Activated T-helper 2 cell treated with anti-CD3 and anti-CD28 coated beads, Interferon-gamma antibody, Interleukin-2, Interleukin-4, amounts not matched to agents 10 μg/mL and 5 μg/mL and 100 μg/mL, durations not matched to agents 14 hours and 24 hours and 36 hours (primary cell): ENCODE measurements at regions of chr1 and their contacts with region 1.

Region 1: DNA sequence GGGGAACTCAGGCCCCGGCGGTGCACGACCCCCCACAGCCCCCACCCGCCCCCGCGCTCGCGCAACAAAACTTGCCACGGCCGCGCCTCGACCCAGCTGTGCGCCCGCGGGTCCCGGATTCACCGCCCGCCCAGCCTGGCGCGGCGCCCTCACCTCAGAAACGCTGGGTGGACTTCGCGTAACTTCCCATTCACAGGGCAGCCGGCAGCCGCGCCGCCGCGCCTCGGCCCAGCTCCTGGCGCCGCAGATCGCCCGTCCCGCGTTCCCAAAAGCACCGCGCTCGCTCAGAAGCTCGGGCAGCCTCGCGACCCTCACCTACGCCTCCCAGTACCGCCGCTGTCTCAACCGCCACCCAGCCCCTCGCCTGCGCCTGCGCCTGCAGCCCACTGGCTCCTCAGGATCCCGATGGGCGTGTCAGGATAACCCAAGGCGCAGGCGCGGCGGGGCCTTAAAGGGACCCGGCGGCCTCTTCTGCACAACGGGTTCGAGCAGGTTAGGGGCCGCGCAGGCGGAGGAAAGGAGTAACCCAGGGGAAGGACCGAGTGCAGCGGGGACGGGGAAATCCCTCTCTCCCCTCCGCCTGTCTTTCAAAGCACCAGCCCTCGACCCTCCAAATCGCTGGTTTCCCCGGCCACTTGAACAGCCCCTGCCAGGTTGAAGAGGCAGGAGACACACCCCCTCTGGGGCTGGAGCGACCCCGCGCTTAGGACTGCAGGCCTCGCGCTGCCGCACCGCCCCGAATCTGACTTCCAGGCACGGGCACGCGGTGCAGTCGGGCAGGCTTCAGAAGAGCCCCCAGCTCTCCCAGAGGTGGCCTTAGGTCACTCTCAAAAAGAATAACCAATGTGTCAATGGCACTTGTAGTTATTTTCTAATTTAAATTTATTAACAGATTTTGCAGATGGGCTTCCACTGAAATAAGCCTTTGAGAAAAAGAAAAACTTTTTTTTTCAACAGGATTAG is at the start of gene NBPF1:
- DNase-seq: peak; percentile 82
- H3K4me3 Mint-ChIP-seq: no peak within 1 kb of the TSS
- H3K27ac Mint-ChIP-seq: no peak within 1 kb of the TSS
- H3K4me1 Mint-ChIP-seq: no peaks in the 10 kb centered on the region
- H3K27me3 Mint-ChIP-seq: no peaks in the 10 kb centered on the region
- total RNA-seq, gene NBPF1: 5.2 and 6.1 TPM in 2 replicates

Region 2: GRCh38 chr1:16644193-16644481 is 30.7 kb after region 1 on chr1:
- intact Hi-C with region 1: loop called (anchors 2 kb)
- DNase-seq: no peak
- H3K4me3 Mint-ChIP-seq: no peak overlapping the region
- H3K27ac Mint-ChIP-seq: no peak overlapping the region
- H3K4me1 Mint-ChIP-seq: no peaks in the 10 kb centered on the region
- H3K27me3 Mint-ChIP-seq: peaks cover 5% of the 10 kb centered on the region

Region 3: DNA sequence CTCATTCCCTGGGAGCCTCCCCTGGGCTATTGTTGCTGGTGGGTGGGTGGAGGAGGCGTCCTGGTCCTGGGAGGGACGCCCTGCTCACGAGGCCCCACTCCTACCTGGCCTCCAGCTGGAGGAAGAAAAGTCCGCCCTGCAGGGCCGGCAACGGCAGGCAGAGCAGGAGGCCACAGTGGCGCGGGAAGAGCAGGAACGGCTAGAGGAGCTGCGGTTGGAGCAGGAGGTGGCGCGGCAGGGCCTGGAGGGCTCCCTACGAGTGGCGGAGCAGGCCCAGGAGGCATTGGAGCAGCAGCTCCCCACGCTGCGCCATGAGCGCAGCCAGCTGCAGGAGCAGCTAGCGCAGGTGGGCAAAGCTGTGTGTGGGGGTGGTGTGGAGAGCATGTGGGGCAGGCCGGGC is 333.2 kb after region 1 on chr1:
- intact Hi-C with region 1: loop called (anchors 1 kb)
- DNase-seq: no peak
- H3K4me3 Mint-ChIP-seq: no peak overlapping the region
- H3K27ac Mint-ChIP-seq: no peak overlapping the region
- H3K4me1 Mint-ChIP-seq: no peaks in the 10 kb centered on the region
- H3K27me3 Mint-ChIP-seq: no peaks in the 10 kb centered on the region